A549 (cell line): ENCODE measurements at regions of chr6 and their contacts with region 1.

Region 1: GRCh38 chr6:88982720-88983119 is 19.3 kb upstream of the RNGTT start:
- DNase-seq: peak; percentile 53 to 56
- ATAC-seq: peak; percentile 83 to 91; a peak in 5 of 6 replicates
- H3K4me3 ChIP-seq: no peak overlapping the region
- H3K27ac ChIP-seq: peak overlapping the region; percentile 38 to 43; a peak in 2 of 6 replicates
- H3K4me1 ChIP-seq: peaks cover 24% of the 10 kb centered on the region
- CTCF ChIP-seq: peak; percentile 72
- EP300 ChIP-seq: no peak
- POLR2A ChIP-seq: no peak
- RAD21 ChIP-seq: peak; percentile 88 to 90

Region 2: GRCh38 chr6:88963139-88964090 is 19.3 kb before region 1 on chr6 and contains the start of gene RNGTT:
- CTCF ChIA-PET with region 1: interaction called, 12 read pairs
- POLR2A ChIA-PET with region 1: no interaction called
- DNase-seq: peak; percentile 86 to 95
- ATAC-seq: peak; percentile 100
- H3K4me3 ChIP-seq: peak within 1 kb of the TSS; percentile 78
- H3K27ac ChIP-seq: peak within 1 kb of the TSS; percentile 87 to 95
- H3K4me1 ChIP-seq: 0 out of 3 replicates have a peak, but pooled peaks cover 8% of the 10 kb centered on the region
- CTCF ChIP-seq: no peak
- EP300 ChIP-seq: no peak
- POLR2A ChIP-seq: peak; percentile 54
- RAD21 ChIP-seq: no peak
- polyA plus RNA-seq, gene RNGTT: 12.8 and 15.0 TPM in 2 replicates

Region 3: DNA sequence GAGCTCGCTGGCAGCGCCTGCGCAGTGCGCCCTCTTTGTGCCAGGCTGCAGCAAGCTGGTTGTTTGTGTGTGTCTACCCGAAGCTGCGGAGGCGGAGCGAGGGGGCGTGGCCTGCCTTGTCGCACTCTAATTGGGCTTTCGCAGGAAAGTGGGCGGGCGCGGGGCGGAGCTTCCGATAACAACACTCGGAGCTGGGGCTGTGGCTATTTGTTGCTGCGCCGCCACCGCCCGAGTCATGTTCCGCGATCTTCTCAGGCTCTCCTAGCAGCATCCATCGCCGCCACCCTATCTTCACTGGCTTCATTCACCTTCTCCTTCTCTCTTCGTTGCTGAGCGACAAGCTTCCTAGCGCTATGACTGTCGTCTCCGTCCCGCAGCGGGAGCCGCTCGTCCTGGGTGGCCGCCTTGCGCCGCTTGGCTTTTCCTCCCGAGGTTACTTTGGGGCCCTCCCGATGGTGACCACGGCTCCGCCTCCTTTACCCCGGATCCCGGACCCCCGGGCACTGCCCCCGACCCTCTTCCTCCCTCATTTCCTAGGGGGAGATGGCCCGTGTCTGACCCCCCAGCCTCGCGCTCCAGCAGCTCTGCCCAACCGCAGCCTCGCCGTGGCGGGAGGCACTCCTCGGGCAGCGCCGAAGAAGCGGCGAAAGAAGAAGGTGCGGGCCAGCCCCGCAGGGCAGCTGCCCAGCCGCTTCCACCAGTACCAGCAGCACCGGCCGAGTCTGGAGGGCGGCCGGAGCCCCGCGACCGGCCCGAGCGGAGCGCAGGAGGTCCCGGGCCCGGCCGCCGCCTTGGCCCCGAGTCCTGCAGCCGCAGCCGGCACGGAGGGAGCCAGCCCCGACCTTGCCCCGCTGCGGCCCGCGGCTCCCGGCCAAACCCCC is 98.1 kb after region 1 on chr6 and contains the start of gene PNRC1:
- CTCF ChIA-PET with region 1: interaction called, 28 read pairs
- POLR2A ChIA-PET with region 1: interaction called, 31 read pairs
- DNase-seq: peak; percentile 89 to 98
- ATAC-seq: peak; percentile 79 to 82
- H3K4me3 ChIP-seq: peak within 1 kb of the TSS; percentile 96
- H3K27ac ChIP-seq: peak within 1 kb of the TSS; percentile 99 to 100
- H3K4me1 ChIP-seq: peaks cover 30% of the 10 kb centered on the region
- CTCF ChIP-seq: no peak
- EP300 ChIP-seq: no peak
- POLR2A ChIP-seq: peak; percentile 93
- RAD21 ChIP-seq: no peak
- polyA plus RNA-seq, gene PNRC1: 27.2 and 28.3 TPM in 2 replicates

Region 4: GRCh38 chr6:89110284-89110683 is 127.6 kb after region 1 on chr6:
- CTCF ChIA-PET with region 1: interaction called, 38 read pairs
- POLR2A ChIA-PET with region 1: no interaction called
- DNase-seq: no peak
- ATAC-seq: no peak
- H3K4me3 ChIP-seq: no peak overlapping the region
- H3K27ac ChIP-seq: no peak overlapping the region
- H3K4me1 ChIP-seq: no peaks in the 10 kb centered on the region
- CTCF ChIP-seq: no peak
- EP300 ChIP-seq: no peak
- POLR2A ChIP-seq: no peak
- RAD21 ChIP-seq: no peak

Region 5: GRCh38 chr6:89117211-89118108 is 134.7 kb after region 1 on chr6 and contains the start of gene SRSF12:
- CTCF ChIA-PET with region 1: interaction called, 38 read pairs
- POLR2A ChIA-PET with region 1: no interaction called
- DNase-seq: peak; percentile 34 to 50
- ATAC-seq: peak; percentile 91 to 95
- H3K4me3 ChIP-seq: peak within 1 kb of the TSS; percentile 71
- H3K27ac ChIP-seq: peak within 1 kb of the TSS; percentile 87 to 89
- H3K4me1 ChIP-seq: peaks cover 23% of the 10 kb centered on the region; the same call in 2 of the 3 replicates
- CTCF ChIP-seq: no peak
- EP300 ChIP-seq: no peak
- POLR2A ChIP-seq: no peak
- RAD21 ChIP-seq: no peak; a peak in 1 of 5 replicates
- polyA plus RNA-seq, gene SRSF12: 1.9 and 2.7 TPM in 2 replicates

Region 6: GRCh38 chr6:89145787-89146646 is 163.3 kb after region 1 on chr6 and contains the start of gene PM20D2:
- CTCF ChIA-PET with region 1: interaction called, 16 read pairs
- POLR2A ChIA-PET with region 1: no interaction called
- DNase-seq: peak; percentile 73 to 79
- ATAC-seq: peak; percentile 94 to 95
- H3K4me3 ChIP-seq: peak within 1 kb of the TSS; percentile 85
- H3K27ac ChIP-seq: peak within 1 kb of the TSS; percentile 96 to 99
- H3K4me1 ChIP-seq: peaks cover 34% of the 10 kb centered on the region
- CTCF ChIP-seq: no peak
- EP300 ChIP-seq: no peak
- POLR2A ChIP-seq: peak; percentile 82
- RAD21 ChIP-seq: no peak
- polyA plus RNA-seq, gene PM20D2: 17.4 and 25.4 TPM in 2 replicates

Region 7: DNA sequence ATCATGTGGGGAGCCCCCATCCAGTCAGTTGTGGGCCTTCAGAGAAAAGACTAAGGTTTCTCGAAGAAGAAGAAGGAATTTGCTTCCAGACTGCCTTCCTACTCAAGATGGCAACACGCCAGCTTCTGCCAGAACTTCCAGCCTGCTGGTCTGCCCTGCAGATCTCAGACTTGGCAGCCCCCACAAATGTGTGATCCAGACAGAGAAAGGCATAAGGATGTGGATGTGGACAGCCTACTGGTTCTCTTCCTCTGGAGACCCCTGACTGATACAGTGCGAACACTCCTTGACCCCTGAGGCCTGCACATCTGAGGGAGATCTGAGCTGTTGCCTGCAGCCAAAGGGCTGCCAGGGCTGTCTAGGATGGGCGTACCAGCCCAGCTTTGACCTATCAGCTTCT is 225.8 kb after region 1 on chr6:
- CTCF ChIA-PET with region 1: no interaction called
- POLR2A ChIA-PET with region 1: no interaction called
- DNase-seq: no peak
- ATAC-seq: no peak
- H3K4me3 ChIP-seq: no peak overlapping the region
- H3K27ac ChIP-seq: no peak overlapping the region
- H3K4me1 ChIP-seq: no peaks in the 10 kb centered on the region
- CTCF ChIP-seq: no peak
- EP300 ChIP-seq: no peak
- POLR2A ChIP-seq: no peak
- RAD21 ChIP-seq: no peak

Region 8: DNA sequence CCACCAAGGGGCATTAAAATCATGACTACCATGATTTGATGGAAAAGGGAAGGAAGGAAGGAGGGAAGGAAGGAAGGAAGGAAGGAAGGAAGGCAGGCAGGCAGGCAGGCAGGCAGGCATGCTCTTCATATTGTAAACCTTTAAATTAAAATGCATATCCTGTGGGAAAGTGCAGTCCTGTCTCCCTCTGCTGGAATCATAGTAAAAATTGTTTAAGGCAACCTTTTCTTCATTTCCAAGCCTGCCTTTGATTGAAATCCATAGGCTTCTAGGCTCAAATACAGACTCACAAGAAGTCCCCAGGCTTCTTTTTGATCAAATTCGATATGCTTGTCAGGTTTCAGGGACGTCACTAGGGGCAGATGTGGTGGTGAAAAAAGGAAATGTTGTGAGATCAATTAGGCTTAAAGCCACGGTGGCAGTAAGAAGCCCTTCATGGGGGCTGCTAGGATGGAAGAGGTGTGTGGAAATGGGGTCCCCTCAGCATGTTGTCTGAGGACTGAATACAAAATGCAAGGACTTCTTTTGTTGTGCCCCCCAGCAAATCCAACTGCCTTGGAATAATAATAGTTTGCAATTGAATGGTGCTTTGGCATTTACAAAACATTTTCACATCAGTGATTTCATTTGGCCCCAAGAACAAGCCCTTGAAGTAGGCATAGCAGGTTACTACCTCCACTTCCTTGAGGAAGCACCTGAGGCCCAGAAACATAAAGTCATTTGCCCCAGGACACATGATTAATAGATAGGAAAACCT is 260.0 kb after region 1 on chr6:
- CTCF ChIA-PET with region 1: interaction called, 34 read pairs
- POLR2A ChIA-PET with region 1: interaction called, 3 read pairs
- DNase-seq: peak; percentile 25 to 59
- ATAC-seq: peak; percentile 64 to 79; a peak in 5 of 6 replicates
- H3K4me3 ChIP-seq: no peak overlapping the region
- H3K27ac ChIP-seq: no peak overlapping the region
- H3K4me1 ChIP-seq: no peaks in the 10 kb centered on the region
- CTCF ChIP-seq: peak; percentile 56
- EP300 ChIP-seq: no peak
- POLR2A ChIP-seq: no peak
- RAD21 ChIP-seq: peak; percentile 74 to 79